HCT116 (cell line): ENCODE measurements at regions of chr14 and their contacts with region 1.

Region 1: DNA sequence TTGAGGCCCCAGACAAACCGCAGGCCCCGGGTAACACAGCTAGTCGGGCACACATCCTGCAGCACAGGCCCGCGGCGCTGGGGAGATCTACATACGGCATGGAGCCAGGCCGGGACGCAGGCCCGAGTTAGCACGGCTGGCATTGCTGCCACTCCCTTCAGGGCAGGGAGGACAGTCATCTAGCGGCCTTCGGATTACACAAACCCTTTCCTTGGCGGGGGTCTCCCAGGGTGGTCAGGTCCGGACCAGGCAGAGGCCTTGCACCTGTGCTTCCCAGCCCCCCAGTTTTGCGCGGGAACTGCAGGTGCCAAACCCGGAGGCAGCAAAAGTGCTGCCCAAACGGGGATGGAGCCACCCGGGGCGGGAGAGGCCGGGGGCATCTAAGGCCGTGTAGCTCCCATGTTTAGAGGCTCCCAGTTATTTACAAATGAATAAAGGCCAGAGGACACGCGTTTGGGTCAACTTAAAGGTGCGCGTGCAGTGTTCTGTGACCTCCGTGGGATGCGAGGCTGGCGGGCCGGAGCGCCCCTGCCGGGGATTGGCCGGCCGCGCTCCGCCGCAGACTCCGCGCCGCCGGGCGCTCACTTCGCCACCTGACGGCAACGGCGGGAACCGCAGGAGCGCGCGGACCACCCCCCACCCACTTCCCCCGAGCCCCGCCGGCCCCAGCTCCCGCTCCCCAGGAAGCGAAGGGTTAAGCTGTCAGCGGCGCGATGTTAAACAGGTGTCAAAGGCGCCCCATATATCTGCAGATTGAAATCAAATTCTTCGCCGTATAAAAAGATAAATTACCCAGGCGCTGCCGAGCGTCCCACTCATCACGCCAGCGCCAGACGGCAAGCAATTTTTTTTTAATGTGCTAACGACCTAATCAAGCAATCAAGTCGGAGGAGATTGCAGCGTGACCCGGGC is 18.1 kb downstream of the VSX2 start:
- DNase-seq: no peak
- ATAC-seq: peak; percentile 92
- H3K4me3 ChIP-seq: peak overlapping the region; percentile 35 to 54
- H3K27ac ChIP-seq: no peak overlapping the region
- H3K4me1 ChIP-seq: peaks cover 0 to 12% of the 10 kb centered on the region in 2 experiments; a peak in 3 of 4 replicates
- H3K27me3 ChIP-seq: no peaks in the 10 kb centered on the region
- CTCF ChIP-seq: peak; percentile 83 to 96 (median 89)
- POLR2A ChIP-seq: no peak
- RAD21 ChIP-seq: peak; percentile 54

Region 2: GRCh38 chr14:74161526-74162158 is 95.7 kb before region 1 on chr14:
- CTCF ChIA-PET with region 1: no interaction called
- POLR2A ChIA-PET with region 1: no interaction called
- RAD21 ChIA-PET with region 1: no interaction called
- intact Hi-C with region 1: no loop called
- DNase-seq: no peak
- ATAC-seq: peak; percentile 22; the same call in 1 of the 2 replicates
- H3K4me3 ChIP-seq: no peak overlapping the region
- H3K27ac ChIP-seq: no peak overlapping the region
- H3K4me1 ChIP-seq: no peaks in the 10 kb centered on the region
- H3K27me3 ChIP-seq: no peaks in the 10 kb centered on the region
- CTCF ChIP-seq: no peak
- POLR2A ChIP-seq: no peak
- RAD21 ChIP-seq: no peak

Region 3: DNA sequence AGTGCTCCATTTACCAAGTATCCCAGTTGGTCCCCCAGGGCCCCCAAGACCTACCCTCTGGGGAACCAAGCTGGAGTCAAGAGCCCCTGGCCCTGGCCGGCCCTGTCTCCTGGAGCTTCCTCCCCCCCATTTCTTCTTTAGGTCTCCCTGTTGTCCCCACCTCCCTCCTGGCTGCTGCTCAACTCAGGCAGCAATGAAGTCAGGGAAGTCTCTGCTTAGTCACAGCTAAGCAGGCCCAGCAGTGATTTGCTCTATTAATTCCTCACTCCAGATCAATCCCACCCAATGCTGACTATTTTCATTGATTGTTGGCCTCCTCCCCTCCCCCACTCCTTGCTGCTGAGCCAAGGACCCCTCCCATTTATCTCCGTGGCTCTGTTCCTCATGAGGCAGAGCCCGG is 10.3 kb after region 1 on chr14:
- CTCF ChIA-PET with region 1: interaction called, 14 read pairs
- POLR2A ChIA-PET with region 1: interaction called, 3 read pairs
- RAD21 ChIA-PET with region 1: interaction called in 1 of 2 experiments, 5 read pairs
- intact Hi-C with region 1: no loop called
- DNase-seq: no peak
- ATAC-seq: no peak
- H3K4me3 ChIP-seq: no peak overlapping the region
- H3K27ac ChIP-seq: no peak overlapping the region
- H3K4me1 ChIP-seq: peaks cover 28 to 45% of the 10 kb centered on the region in 2 experiments
- H3K27me3 ChIP-seq: no peaks in the 10 kb centered on the region
- CTCF ChIP-seq: no peak
- POLR2A ChIP-seq: no peak
- RAD21 ChIP-seq: no peak